Activated CD4-positive, alpha-beta T cell treated with anti-CD3 and anti-CD28 coated beads, Interleukin-2, amount 10 ng/mL, durations not matched to agents 7 days and 5 days (primary cell): ENCODE measurements at regions of chr15 and their contacts with region 1.

Region 1: GRCh38 chr15:67101911-67102598 is 36.7 kb downstream of the SMAD3 start:
- DNase-seq: peak; percentile 57
- H3K4me3 Mint-ChIP-seq: no peak overlapping the region
- H3K27ac Mint-ChIP-seq: no peak overlapping the region
- H3K4me1 Mint-ChIP-seq: peaks cover 27% of the 10 kb centered on the region
- H3K27me3 Mint-ChIP-seq: no peaks in the 10 kb centered on the region

Region 2: GRCh38 chr15:67049351-67050044 is 52.6 kb before region 1 on chr15:
- CTCF ChIA-PET with region 1: no interaction called
- POLR2A ChIA-PET with region 1: no interaction called
- DNase-seq: no peak
- H3K4me3 Mint-ChIP-seq: no peak overlapping the region
- H3K27ac Mint-ChIP-seq: peak overlapping the region; percentile 78
- H3K4me1 Mint-ChIP-seq: peaks cover 43% of the 10 kb centered on the region
- H3K27me3 Mint-ChIP-seq: no peaks in the 10 kb centered on the region

Region 3: GRCh38 chr15:67085818-67086636 is 16.0 kb before region 1 on chr15:
- CTCF ChIA-PET with region 1: interaction called, 10 read pairs
- POLR2A ChIA-PET with region 1: no interaction called
- DNase-seq: peak; percentile 39
- H3K4me3 Mint-ChIP-seq: peak overlapping the region; percentile 27
- H3K27ac Mint-ChIP-seq: peak overlapping the region; percentile 92
- H3K4me1 Mint-ChIP-seq: peaks cover 96% of the 10 kb centered on the region
- H3K27me3 Mint-ChIP-seq: no peaks in the 10 kb centered on the region

Region 4: DNA sequence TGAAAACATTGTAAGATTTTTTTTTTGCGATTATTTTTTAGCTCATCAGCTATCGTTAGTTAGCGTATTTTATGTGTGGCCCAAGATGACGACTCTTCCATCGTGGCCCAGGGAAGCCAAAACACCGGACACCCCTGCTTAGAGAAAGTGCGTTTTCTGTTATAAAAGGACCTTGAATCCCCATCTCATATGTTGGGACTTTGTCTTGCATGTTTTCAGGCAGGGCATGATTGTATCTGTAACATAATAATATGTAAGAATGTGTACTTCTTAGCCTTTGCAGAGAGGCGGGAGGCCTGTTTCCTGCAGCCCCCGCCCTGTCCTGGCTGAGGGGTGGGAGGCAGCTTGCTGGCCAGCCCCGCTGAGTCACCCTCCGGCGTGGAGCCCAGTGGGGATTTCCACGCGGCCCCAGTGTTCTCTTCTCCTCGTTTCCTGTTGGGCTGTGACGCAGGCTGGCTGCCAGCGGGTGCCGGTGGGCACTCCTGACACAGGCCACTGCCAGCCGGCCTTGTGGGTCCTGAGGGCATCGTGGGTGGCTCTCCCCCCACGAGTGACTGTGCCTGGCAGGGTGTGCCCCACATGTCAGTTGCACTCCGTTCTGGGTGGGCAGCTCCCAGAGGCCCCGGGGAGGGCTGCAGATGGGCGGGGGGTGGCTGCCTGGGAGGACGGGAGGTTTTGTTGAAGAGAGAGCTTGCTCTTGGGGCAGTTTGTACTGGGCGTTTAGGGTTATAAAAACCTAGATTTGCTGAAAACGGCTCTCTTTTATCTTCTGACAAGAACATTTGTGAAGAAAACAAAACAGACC is 19.0 kb after region 1 on chr15:
- CTCF ChIA-PET with region 1: interaction called, 17 read pairs
- POLR2A ChIA-PET with region 1: interaction called, 3 read pairs
- DNase-seq: peak; percentile 82
- H3K4me3 Mint-ChIP-seq: peak overlapping the region; percentile 61
- H3K27ac Mint-ChIP-seq: peak overlapping the region; percentile 89
- H3K4me1 Mint-ChIP-seq: peaks cover 95% of the 10 kb centered on the region
- H3K27me3 Mint-ChIP-seq: no peaks in the 10 kb centered on the region

Region 5: DNA sequence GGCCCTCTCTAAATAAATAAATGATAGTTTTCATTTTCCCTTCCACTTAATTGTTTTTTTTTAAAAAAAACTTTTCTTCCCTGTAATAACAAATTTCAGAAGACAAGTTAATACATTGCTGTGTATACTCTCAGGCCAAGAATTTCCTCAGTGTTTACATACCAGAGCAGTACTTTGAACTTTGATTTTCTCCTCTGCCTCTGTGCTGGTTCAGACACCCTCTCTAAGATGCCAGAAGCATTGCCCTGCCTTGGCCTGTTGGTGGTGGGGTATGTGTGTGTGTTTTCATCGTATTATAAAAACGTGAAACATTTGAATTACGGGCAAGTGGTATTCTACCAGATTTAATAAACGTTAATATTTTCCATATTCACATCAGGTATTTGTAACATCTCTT is 33.4 kb after region 1 on chr15:
- CTCF ChIA-PET with region 1: no interaction called
- POLR2A ChIA-PET with region 1: no interaction called
- DNase-seq: no peak
- H3K4me3 Mint-ChIP-seq: no peak overlapping the region
- H3K27ac Mint-ChIP-seq: peak overlapping the region; percentile 88
- H3K4me1 Mint-ChIP-seq: peaks cover 98% of the 10 kb centered on the region
- H3K27me3 Mint-ChIP-seq: no peaks in the 10 kb centered on the region

Region 6: GRCh38 chr15:67232591-67232990 is 130.5 kb after region 1 on chr15:
- CTCF ChIA-PET with region 1: no interaction called
- POLR2A ChIA-PET with region 1: no interaction called
- DNase-seq: no peak
- H3K4me3 Mint-ChIP-seq: no peak overlapping the region
- H3K27ac Mint-ChIP-seq: no peak overlapping the region
- H3K4me1 Mint-ChIP-seq: peaks cover 15% of the 10 kb centered on the region
- H3K27me3 Mint-ChIP-seq: no peaks in the 10 kb centered on the region